ENCODE measurements at regions of chr7 and their contacts with region 1.

Region 1: GRCh38 chr7:27160546-27161213 is 4.2 kb upstream of the HOXA7 start:
- DNase-seq: peak; percentile 91
- CTCF ChIP-seq: peak; percentile 99

Region 2: DNA sequence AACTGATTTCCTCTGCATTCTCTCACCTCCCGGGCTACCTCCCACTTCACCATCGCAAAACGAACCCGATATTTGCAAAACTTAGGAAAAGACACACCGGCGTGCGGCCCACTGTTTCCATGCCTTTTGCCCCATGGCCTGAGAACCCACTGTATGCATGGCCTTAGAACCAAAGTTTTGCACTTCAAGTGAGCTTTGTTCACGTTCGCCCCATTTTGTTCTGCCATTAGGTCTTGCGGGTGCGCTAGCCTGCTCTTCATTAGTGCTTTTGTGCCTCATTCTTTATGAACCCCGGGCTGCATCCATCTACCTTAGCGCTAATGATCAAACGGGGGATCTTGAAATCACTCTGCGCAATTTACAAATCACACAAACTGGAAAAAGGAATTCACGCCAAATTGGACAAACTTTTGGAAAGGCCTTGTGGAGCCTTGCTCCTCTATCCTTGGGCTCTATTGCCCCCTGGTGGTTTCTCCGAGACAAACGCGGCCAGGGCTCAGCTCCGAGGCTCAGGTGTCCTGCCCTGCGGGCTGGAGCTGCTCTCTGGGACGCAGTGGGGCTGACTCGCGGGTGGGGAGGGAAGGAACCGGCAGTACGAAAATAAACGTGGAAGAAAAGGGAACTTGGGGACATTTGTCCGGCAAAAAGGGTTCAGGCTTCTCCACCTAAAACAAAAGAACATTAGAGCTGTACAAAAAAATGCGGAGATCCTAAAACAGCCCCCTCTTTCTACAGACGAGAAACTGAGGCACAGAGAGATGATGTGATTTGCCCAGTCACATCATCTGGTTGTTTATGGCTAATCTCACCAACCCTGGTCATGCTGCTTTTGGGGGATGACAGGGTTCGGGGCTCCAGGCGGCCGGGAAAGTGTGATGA is 1309.1 kb before region 1 on chr7:
- in situ Hi-C with region 1: loop called (anchors 10 kb)
- DNase-seq: peak; percentile 70
- CTCF ChIP-seq: peak; percentile 87

Region 3: GRCh38 chr7:26365077-26365900 is 795.4 kb before region 1 on chr7:
- in situ Hi-C with region 1: loop called (anchors 25 kb)
- DNase-seq: peak; percentile 34
- CTCF ChIP-seq: peak; percentile 66